Activated CD4-positive, alpha-beta T cell treated with anti-CD3 and anti-CD28 coated beads for 36 hours (primary cell): ENCODE measurements at regions of chr12 and their contacts with region 1.

Region 1: DNA sequence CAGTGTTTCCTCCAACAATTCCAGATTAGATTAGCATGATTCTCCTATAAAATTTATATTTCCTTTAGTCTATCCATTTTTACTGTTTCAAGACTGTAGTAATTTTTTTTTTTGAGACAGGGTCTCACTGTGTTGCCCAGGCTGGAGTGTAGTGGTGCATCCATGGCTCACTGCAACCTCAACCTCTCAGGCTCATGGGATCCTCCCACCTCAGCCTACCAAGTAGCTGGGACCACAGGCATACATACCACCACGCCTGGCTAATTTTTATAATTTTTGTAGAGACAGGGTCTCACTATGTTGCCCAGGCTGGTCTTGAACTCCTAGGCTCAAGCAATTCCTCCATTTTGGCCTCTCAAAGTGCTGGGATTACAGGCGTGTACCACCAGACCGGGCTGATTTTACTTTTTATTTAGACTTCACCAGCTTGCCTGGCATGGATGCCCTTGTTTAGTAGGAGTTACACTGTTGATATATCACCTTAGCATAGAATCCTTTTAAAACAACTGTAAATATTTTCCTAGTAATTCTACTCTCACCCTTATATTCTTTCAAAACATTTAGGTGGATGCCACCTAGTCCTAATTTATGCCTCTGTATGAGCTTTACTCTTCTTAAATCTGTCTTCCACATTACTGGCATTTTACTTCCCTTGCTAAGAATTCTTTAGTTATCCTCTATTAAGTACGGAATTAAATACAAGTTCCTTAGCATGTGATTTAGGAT is 55.8 kb upstream of the LIMA1 start:
- DNase-seq: no peak
- ATAC-seq: no peak
- H3K4me3 Mint-ChIP-seq: no peak overlapping the region
- H3K27ac Mint-ChIP-seq: no peak overlapping the region
- H3K4me1 Mint-ChIP-seq: peaks cover 3% of the 10 kb centered on the region
- H3K27me3 Mint-ChIP-seq: no peaks in the 10 kb centered on the region

Region 2: DNA sequence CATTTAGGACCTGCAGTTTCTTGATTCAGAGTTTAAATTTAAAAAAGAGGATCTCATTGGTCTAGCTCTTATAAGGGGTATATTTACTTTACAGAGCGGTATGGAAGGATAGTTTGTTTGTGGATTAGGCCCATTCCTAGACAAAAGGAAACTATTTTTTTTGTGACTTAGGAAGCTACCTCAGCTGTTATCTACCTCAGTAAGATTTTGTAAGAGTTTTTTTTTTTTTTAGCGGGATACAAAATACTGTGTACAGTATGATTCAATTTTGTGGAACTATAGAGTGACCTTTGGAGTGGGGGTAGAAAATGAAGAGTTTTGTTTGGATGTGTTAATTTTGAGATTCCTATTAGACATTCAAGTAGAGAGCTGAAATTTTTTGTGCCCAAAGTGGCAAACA is 320.2 kb after region 1 on chr12:
- CTCF ChIA-PET with region 1: no interaction called
- POLR2A ChIA-PET with region 1: interaction called, 11 read pairs
- intact Hi-C with region 1: no loop called
- DNase-seq: no peak
- ATAC-seq: no peak
- H3K4me3 Mint-ChIP-seq: no peak overlapping the region
- H3K27ac Mint-ChIP-seq: no peak overlapping the region
- H3K4me1 Mint-ChIP-seq: peaks cover 5% of the 10 kb centered on the region
- H3K27me3 Mint-ChIP-seq: no peaks in the 10 kb centered on the region